Keratinocyte (primary cell): ENCODE measurements at regions of chr12 and their contacts with region 1.

Region 1: GRCh38 chr12:62603061-62603810 is 136.6 kb downstream of the MON2 start:
- DNase-seq: no peak
- H3K4me3 ChIP-seq: peak overlapping the region; percentile 71 to 95 (median 75)
- H3K27ac ChIP-seq: peak overlapping the region; percentile 95
- H3K4me1 ChIP-seq: peaks cover 16% of the 10 kb centered on the region
- H3K27me3 ChIP-seq: no peaks in the 10 kb centered on the region
- CTCF ChIP-seq: peak; percentile 40 to 73 (median 71)

Region 2: GRCh38 chr12:62799126-62799736 is 196.0 kb after region 1 on chr12:
- dilution Hi-C with region 1: loop called (anchors 25 kb)
- DNase-seq: peak; percentile 26
- H3K4me3 ChIP-seq: no peak overlapping the region
- H3K27ac ChIP-seq: no peak overlapping the region
- H3K4me1 ChIP-seq: no peaks in the 10 kb centered on the region
- H3K27me3 ChIP-seq: no peaks in the 10 kb centered on the region
- CTCF ChIP-seq: peak; percentile 83 to 95 (median 88)